Mammary epithelial cell (primary cell): ENCODE measurements at regions of chr5 and their contacts with region 1.

Region 1: DNA sequence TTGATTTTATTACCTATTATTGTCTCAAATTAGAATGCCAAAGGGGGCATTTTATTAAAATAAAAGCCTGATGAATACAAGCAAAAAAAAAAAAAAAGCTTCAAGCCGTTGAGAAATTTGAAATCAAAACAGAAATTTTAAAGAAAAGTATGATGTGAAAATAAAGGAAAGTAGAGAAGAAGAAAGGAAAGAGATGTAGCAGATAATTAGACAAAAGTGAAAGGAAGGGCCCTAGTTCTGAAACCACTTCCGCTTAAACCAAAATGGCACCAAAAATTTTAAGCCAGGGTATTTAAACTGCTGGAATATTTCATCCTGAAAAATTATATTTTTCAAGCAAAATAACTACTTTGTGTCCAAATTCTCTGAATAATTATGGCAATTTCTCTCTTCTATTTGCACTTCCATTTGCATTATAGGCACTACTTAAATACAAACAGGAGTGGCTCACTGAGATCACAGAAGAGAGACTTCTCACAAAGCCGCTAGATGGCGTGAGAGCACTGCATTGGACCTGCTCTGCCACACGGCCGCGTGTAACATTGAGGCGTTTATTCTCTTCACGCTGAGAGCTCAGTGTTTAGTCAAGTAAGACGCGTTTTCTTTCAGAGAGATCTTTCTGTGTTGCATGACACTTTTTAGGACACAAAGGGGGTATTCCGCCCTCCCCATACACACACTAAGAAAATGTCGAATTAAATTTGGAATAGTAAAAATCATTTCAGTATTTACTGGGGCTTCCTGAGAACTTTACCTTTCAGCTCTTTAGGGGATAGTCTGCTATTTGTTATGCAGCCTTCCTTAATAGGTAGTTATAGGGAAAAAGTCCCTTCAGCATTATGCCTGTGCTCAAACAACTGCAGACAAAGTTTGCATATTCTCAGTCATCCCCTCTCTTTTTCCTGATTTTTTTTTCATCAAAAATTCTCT is 368.4 kb upstream of the CCNH start:
- DNase-seq: peak; percentile 68
- H3K4me3 ChIP-seq: no peak overlapping the region
- H3K27ac ChIP-seq: no peak overlapping the region
- H3K4me1 ChIP-seq: peaks cover 12% of the 10 kb centered on the region
- H3K27me3 ChIP-seq: no peaks in the 10 kb centered on the region
- CTCF ChIP-seq: peak; percentile 92 to 94

Region 2: GRCh38 chr5:87421307-87421706 is 359.8 kb before region 1 on chr5:
- CTCF ChIA-PET with region 1: no interaction called
- dilution Hi-C with region 1: no loop called
- in situ Hi-C with region 1: no loop called
- intact Hi-C with region 1: loop called (anchors 1 kb)
- DNase-seq: peak; percentile 81
- H3K4me3 ChIP-seq: no peak overlapping the region
- H3K27ac ChIP-seq: peak overlapping the region; percentile 51
- H3K4me1 ChIP-seq: peaks cover 14% of the 10 kb centered on the region
- H3K27me3 ChIP-seq: no peaks in the 10 kb centered on the region
- CTCF ChIP-seq: no peak

Region 3: DNA sequence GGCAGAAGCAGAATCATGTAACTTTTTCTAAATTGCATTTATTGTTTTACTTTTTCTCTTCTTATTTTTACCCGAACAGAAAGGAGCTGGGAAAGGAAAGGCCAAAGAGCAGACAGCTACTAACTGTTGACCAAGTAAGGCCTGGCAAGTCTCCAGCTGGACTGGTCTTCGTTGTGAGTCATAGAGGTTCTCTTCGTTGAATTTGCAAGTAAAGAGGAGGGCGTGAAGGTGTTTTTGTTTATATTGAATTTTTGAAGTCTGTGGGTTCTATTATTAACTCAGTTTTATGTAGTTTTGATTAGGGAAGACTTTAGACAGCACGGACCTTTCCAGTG is 48.1 kb after region 1 on chr5:
- CTCF ChIA-PET with region 1: no interaction called
- dilution Hi-C with region 1: no loop called
- in situ Hi-C with region 1: no loop called
- intact Hi-C with region 1: no loop called
- DNase-seq: peak; percentile 52
- H3K4me3 ChIP-seq: no peak overlapping the region
- H3K27ac ChIP-seq: no peak overlapping the region
- H3K4me1 ChIP-seq: no peaks in the 10 kb centered on the region
- H3K27me3 ChIP-seq: no peaks in the 10 kb centered on the region
- CTCF ChIP-seq: no peak

Region 4: DNA sequence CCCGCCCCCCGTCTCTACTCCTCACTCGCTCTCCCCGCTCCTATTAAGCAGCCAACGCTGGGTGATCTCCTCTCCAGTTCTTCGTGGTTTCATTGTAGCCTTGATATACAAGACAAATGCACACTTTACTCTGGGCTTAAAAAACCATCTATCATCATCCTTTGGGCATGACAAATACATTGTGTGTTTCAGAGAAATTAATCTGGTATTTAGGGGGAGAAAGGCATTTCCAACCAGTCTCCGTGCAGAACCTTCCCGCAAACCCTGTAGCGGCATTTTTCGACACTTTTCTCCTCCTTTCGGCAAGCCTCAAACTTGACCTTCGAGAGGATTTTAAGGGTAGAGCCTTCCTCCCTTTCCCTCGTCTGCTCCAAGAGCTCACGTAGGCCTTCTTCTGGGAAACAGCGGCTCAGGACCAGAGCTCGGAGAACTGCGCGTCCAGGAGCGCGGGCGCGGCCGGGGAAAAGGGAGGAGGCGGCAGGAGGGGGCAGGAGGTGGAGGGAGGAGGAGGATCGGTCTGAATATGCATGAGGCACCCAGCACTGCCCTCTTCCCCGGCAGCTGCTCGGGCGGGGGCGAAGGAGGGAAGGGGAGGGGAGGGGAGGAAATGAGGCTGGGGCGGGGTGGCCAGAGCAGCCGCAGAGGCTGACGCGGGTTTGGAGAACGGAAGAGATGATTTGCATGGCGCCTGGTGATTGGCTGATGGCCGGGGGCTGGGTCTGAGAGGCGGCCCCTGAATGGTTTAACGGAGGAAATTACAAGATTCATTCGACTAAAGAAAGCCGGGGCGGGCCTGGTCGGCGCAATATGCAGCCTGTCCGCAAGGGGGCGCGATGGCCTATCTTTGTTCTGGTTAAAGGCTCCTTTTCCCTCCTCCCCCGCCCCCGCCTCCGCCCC is 360.0 kb after region 1 on chr5:
- CTCF ChIA-PET with region 1: interaction called, 8 read pairs
- dilution Hi-C with region 1: no loop called
- in situ Hi-C with region 1: no loop called
- intact Hi-C with region 1: loop called (anchors 2 kb)
- DNase-seq: peak; percentile 95
- H3K4me3 ChIP-seq: peak overlapping the region; percentile 39 to 47 (median 42)
- H3K27ac ChIP-seq: no peak overlapping the region
- H3K4me1 ChIP-seq: peaks cover 21% of the 10 kb centered on the region
- H3K27me3 ChIP-seq: peaks cover 12% of the 10 kb centered on the region
- CTCF ChIP-seq: peak; percentile 47 to 63

Region 5: GRCh38 chr5:88602584-88602983 is 821.5 kb after region 1 on chr5:
- CTCF ChIA-PET with region 1: no interaction called
- dilution Hi-C with region 1: no loop called
- in situ Hi-C with region 1: no loop called
- intact Hi-C with region 1: loop called (anchors 1 kb)
- DNase-seq: no peak
- H3K4me3 ChIP-seq: no peak overlapping the region
- H3K27ac ChIP-seq: no peak overlapping the region
- H3K4me1 ChIP-seq: no peaks in the 10 kb centered on the region
- H3K27me3 ChIP-seq: peaks cover 7% of the 10 kb centered on the region
- CTCF ChIP-seq: peak; percentile 47 to 63

Region 6: DNA sequence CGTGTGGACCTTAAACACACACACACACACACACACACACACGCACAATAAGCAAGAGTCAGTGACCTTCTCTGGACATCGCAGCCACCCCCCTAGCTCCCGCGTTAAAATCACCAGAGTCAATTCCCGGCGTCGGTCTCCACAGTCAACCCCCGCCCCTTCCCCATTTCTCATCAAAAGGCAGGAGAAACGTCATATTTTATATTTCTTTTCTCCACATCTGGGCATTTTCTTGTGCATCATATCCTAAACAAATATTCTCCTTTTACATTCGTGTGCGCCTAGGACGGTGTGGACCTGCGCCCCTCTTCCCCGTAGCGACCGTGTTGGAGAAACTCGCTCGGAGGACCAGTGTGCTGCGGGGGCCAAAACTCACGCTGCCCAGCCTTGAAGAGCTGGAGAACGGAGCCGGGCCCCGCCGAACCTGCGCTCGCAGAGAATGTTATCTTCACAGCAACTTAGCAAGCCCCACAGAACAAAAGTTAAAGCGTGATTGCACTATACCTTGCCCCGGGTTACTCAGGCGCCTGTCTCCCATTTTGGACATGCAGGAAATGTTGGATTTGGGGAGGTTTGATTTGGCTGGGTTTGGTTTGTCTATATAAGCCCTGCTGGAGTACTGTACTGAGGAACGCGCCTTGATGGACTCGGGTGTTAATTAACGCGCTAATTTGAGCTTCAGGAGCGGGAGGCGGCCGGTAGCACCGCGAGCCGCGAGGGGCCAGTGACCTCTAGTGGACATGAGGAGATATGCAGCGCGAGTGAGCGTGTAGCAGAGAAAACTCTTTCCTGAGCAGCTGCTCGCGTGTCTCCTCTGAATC is 909.5 kb after region 1 on chr5:
- CTCF ChIA-PET with region 1: interaction called, 4 read pairs
- dilution Hi-C with region 1: no loop called
- in situ Hi-C with region 1: loop called (anchors 10 to 25 kb)
- intact Hi-C with region 1: loop called (anchors 1 kb)
- DNase-seq: peak; percentile 32
- H3K4me3 ChIP-seq: no peak overlapping the region
- H3K27ac ChIP-seq: no peak overlapping the region
- H3K4me1 ChIP-seq: no peaks in the 10 kb centered on the region
- H3K27me3 ChIP-seq: peaks cover 93% of the 10 kb centered on the region
- CTCF ChIP-seq: peak; percentile 93 to 97